Activated B cell treated with CpG ODN at 0.5 μM for 24 hours (primary cell): ENCODE measurements at regions of chr7 and their contacts with region 1.

Region 1: GRCh38 chr7:87075671-87076404 is 16.4 kb upstream of the ELAPOR2 start:
- DNase-seq: no peak
- ATAC-seq: no peak
- H3K4me3 Mint-ChIP-seq: no peak overlapping the region
- H3K27ac Mint-ChIP-seq: no peak overlapping the region
- H3K4me1 Mint-ChIP-seq: peaks cover 7% of the 10 kb centered on the region
- H3K27me3 Mint-ChIP-seq: peaks cover 15% of the 10 kb centered on the region
- CTCF ChIP-seq: no peak

Region 2: GRCh38 chr7:87139514-87139913 is 63.7 kb after region 1 on chr7:
- CTCF ChIA-PET with region 1: no interaction called
- POLR2A ChIA-PET with region 1: no interaction called
- intact Hi-C with region 1: loop called (anchors 5 kb)
- DNase-seq: no peak
- ATAC-seq: no peak
- H3K4me3 Mint-ChIP-seq: no peak overlapping the region
- H3K27ac Mint-ChIP-seq: no peak overlapping the region
- H3K4me1 Mint-ChIP-seq: peaks cover 9% of the 10 kb centered on the region
- H3K27me3 Mint-ChIP-seq: peaks cover 8% of the 10 kb centered on the region
- CTCF ChIP-seq: no peak